ENCODE measurements at regions of chr9 and their contacts with region 1.

Region 1: DNA sequence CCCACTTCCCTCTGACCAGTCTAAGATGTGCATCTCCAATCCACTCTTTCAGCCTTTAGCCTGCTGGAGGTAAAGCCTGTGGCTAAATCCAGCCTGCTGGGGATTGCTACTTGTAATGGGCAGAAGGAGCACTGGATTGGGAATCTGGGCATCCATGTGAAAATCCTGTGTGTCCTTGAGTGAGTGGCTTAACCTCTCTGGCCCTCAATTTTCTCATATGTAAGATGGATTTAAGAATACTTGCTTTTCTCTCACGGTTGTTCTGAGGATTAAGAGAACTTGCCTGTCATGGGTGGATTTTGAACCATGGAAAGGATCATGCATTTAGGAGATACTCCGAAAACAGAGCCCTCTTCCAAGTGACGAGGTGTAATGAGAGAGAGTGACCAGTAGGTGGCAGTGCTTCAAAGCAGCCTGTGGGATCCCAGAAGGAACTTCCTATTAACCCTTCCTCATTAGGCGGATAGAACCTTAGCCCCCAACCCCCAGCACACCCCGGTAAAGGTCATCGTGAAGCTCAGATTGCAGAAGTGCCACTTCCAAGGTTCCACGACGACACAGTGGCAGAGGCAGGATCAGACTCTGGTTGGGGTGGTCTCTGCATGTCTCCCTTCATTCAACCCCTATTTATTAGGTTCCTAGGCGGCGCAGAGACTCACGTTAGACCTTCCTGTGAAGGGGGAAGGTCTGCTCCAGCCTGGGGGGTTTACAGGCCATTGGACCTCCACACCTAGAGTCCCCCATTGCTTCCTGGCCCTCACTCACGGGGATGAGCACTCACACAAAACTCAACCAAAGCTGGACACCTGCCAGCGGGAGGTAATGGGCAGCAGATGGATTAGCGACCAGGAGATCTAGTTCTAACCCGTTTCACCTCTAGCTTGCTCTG is 68.7 kb upstream of the ZNF618 start:
- DNase-seq: peak in 4 of 5 donors; percentile 24 to 43 (median 34)
- ATAC-seq: peak in 3 of 4 donors; percentile 61 to 76 (median 70)
- H3K4me3 ChIP-seq: peak overlapping the region in 8 of 12 donors; percentile 2 to 35 (median 24)
- H3K27ac ChIP-seq: no peak overlapping the region
- H3K4me1 ChIP-seq: peaks cover 0 to 15% (median 2%) of the 10 kb centered on the region in 12 donors
- H3K27me3 ChIP-seq: peaks cover 0 to 9% (median 0%) of the 10 kb centered on the region in 9 donors
- CTCF ChIP-seq: peak; percentile 81 to 94 (median 89)
- POLR2A ChIP-seq: no peak

Region 2: DNA sequence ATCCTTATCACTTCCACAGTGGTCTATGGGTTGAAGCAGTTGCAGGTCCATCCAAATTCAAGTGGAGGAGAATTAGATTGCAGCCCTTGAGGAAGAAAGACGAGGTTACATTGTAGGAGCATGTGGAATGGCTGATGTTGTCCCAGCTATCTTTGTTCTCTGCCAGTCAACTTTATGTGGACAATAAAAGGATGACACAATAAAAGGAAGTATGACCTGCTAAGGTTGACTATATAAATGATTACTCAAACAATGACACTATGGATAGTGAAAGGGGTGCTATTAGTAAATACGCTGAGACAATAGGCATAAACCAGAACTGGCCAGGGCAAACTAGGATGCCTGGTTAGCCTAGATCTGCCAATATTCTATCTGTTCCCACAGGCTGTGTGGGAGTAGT is 55.9 kb after region 1 on chr9:
- intact Hi-C with region 1: loop called in 1 of 10 experiments (anchors 5 kb)
- DNase-seq: no peak
- ATAC-seq: no peak
- H3K4me3 ChIP-seq: no peak overlapping the region
- H3K27ac ChIP-seq: no peak overlapping the region
- H3K4me1 ChIP-seq: no peaks in the 10 kb centered on the region
- H3K27me3 ChIP-seq: peaks cover 0 to 18% (median 0%) of the 10 kb centered on the region in 9 donors
- CTCF ChIP-seq: no peak
- POLR2A ChIP-seq: no peak

Region 3: GRCh38 chr9:113876151-113876992 is 69.0 kb after region 1 on chr9 and contains the start of gene ZNF618:
- intact Hi-C with region 1: loop called in 3 of 10 experiments (anchors 2 to 5 kb)
- DNase-seq: peak; percentile 24 to 73 (median 44)
- ATAC-seq: peak in 3 of 4 donors; percentile 32 to 83 (median 64)
- H3K4me3 ChIP-seq: peak within 1 kb of the TSS; percentile 71 to 97 (median 84)
- H3K27ac ChIP-seq: peak within 1 kb of the TSS in 10 of 12 donors; percentile 39 to 86 (median 66)
- H3K4me1 ChIP-seq: peaks cover 0 to 37% (median 7%) of the 10 kb centered on the region in 12 donors
- H3K27me3 ChIP-seq: no peaks in the 10 kb centered on the region
- CTCF ChIP-seq: peak; percentile 17 to 59 (median 38)
- POLR2A ChIP-seq: no peak
- total RNA-seq, gene ZNF618: 0.81 to 4.2 (median 2.0) TPM

Region 4: GRCh38 chr9:113963017-113963620 is 155.7 kb after region 1 on chr9:
- intact Hi-C with region 1: loop called in 2 of 10 experiments (anchors 2 to 5 kb)
- DNase-seq: peak in 1 of 5 donors; percentile 26
- ATAC-seq: no peak
- H3K4me3 ChIP-seq: no peak overlapping the region
- H3K27ac ChIP-seq: no peak overlapping the region
- H3K4me1 ChIP-seq: peaks cover 0 to 4% (median 0%) of the 10 kb centered on the region in 12 donors
- H3K27me3 ChIP-seq: no peaks in the 10 kb centered on the region
- CTCF ChIP-seq: peak; percentile 23 to 72 (median 56)
- POLR2A ChIP-seq: no peak

Region 5: GRCh38 chr9:114027159-114027895 is 219.9 kb after region 1 on chr9:
- intact Hi-C with region 1: loop called in 9 of 10 experiments (anchors 2 to 5 kb)
- DNase-seq: peak in 1 of 5 donors; percentile 9
- ATAC-seq: no peak
- H3K4me3 ChIP-seq: no peak overlapping the region
- H3K27ac ChIP-seq: no peak overlapping the region
- H3K4me1 ChIP-seq: peaks cover 0 to 4% (median 0%) of the 10 kb centered on the region in 12 donors
- H3K27me3 ChIP-seq: no peaks in the 10 kb centered on the region
- CTCF ChIP-seq: no peak
- POLR2A ChIP-seq: no peak

Region 6: DNA sequence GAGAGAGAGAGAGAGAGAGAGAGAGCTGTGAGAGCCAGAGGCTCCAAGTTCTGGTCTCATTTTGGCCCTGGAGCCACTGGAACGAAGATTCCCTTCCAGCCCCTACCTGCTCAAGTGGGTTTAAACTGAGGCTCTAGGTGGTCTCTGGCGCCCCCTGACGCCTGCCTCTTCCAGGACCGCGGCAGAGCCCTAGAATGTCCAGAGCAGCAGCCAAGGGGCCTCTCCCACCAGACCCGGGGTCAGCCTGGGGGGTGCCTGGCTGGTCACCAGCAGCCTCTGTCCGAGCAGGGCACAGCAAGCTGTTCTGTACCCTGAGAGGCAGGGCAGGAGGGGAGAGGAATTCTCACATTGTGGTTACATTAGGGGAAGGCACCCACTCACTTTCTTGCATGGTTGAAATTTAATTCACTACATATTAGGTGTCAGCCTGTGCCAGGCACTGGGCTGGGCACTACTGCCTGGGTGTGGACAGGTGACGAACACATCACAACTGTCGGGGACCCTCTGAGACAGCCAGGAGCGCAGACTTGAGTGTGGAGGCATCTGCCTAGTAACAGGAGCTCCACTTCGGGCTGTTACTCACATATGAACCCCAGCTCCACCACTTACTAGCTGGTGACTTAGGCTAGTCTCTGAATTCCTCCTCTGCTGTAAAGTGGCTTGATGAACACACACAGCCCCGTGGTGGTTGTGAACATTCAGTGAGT is 226.1 kb after region 1 on chr9:
- intact Hi-C with region 1: loop called (anchors 1 to 5 kb)
- DNase-seq: peak in 4 of 5 donors; percentile 39 to 58 (median 46)
- ATAC-seq: peak; percentile 36 to 78 (median 72)
- H3K4me3 ChIP-seq: no peak overlapping the region
- H3K27ac ChIP-seq: no peak overlapping the region
- H3K4me1 ChIP-seq: peaks cover 0 to 5% (median 0%) of the 10 kb centered on the region in 12 donors
- H3K27me3 ChIP-seq: no peaks in the 10 kb centered on the region
- CTCF ChIP-seq: peak; percentile 39 to 77 (median 63)
- POLR2A ChIP-seq: no peak

Region 7: DNA sequence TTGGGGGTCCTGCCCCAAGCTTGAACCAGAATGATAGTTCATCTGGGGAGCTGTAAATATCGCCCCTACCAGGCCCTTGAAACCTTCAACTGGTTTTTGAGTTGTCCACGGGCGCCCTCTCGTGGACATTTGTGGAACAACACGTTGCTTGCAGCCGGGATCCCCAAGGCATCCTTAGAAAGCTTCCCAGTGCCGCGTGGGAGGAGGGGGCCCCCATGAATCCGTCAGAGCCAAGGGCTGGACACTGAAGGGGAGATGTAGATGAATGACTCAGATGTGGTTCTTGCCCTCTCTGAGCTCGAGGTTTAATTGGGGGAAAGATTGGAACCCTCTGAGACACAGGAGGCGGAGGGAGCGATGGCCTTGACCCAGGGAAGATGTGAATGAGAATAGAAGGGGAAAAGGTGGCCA is 483.7 kb after region 1 on chr9:
- intact Hi-C with region 1: loop called in 1 of 10 experiments (anchors 5 kb)
- DNase-seq: peak; percentile 46 to 83 (median 59)
- ATAC-seq: peak in 3 of 4 donors; percentile 38 to 62 (median 49)
- H3K4me3 ChIP-seq: no peak overlapping the region
- H3K27ac ChIP-seq: no peak overlapping the region
- H3K4me1 ChIP-seq: no peaks in the 10 kb centered on the region
- H3K27me3 ChIP-seq: no peaks in the 10 kb centered on the region
- CTCF ChIP-seq: peak; percentile 77 to 96 (median 93)
- POLR2A ChIP-seq: no peak

Measured in heart left ventricle (tissue), 16 donors.